ENCODE measurements at regions of chr11 and their contacts with region 1.

Region 1: GRCh38 chr11:113305440-113306336 is 8.7 kb upstream of the TTC12 start:
- DNase-seq: peak; percentile 55 to 86
- ATAC-seq: peak; percentile 98

Region 2: DNA sequence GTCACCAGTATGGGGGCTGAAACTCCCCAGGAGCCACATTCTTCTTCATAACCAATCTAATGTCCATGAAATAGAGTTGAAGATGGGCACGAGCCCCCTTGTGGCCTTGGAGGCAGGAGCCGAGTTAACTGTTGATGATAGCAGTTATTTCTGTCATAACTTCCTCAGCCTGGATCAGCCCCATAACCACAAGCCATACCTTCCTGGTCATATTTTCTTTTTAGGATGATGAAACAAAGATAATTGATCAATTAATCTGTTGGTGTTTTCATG is 56.3 kb before region 1 on chr11:
- intact Hi-C with region 1: no loop called
- DNase-seq: no peak
- ATAC-seq: no peak

Region 3: DNA sequence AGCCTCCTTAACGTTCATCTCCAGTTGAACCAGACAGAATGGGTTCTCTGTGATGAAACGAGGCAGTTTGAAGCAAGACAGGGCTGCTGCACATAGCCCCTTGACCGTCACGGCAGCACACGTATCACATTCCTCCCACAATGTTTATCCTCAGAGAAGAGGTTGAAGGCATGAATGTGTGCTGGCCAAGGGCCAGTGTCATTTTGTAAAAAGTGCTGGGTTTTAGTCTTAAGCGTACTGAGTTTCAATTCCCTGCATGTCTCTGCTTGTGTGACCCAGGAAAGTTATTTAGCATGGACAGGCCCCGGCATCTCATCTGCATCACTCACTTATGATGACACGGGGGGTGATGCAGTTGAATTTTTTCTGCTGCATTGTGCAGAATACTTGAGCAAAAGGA is 40.3 kb after region 1 on chr11:
- intact Hi-C with region 1: no loop called
- DNase-seq: no peak
- ATAC-seq: no peak

Region 4: DNA sequence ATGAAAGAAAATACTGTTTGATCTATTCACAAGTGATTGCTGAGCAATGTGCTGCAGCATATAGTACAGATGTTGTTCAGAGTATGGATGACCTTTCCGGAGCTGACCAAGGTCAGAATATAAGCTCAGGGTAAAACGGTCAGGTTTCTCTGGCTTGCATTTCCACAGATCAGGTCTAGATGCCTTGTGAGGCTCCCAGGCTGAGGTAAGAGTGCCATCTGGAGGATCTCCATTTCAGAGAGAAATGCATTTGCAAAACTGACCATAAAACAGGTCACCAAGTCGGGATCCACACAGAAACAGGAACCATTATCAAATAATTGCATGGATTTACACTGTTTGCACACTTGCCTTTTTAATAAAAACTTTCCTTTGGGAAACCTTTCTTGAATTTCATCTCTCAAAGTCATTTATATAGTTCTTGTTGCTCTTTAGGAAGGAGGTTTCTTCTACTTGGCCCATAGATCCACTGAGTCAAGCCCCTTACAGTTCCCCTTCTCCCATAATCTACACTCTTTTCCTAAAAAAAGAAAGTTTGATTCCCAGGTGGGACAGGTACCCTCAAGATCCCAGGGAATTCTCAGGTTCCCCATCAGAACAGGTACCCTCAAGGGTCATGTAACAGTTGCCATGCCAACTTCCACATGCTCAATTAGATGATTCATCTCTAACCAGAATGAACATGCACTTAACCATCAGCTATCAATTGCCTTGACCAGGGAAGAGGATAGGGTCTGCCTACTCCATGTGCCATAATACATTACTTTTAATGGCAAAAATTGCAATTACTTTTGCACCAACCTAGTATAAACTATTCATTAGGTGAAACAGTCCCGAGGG is 425.4 kb after region 1 on chr11:
- intact Hi-C with region 1: loop called (anchors 5 to 10 kb)
- DNase-seq: peak in 1 of 2 donors; percentile 24
- ATAC-seq: peak; percentile 82